Naive thymus-derived CD4-positive, alpha-beta T cell (primary cell): ENCODE measurements at regions of chr22 and their contacts with region 1.

Region 1: GRCh38 chr22:40024201-40025061 is 29.7 kb downstream of the FAM83F start:
- DNase-seq: peak; percentile 26 to 59 (median 44)
- ATAC-seq: peak; percentile 79
- H3K4me3 ChIP-seq: no peak overlapping the region
- H3K4me3 Mint-ChIP-seq: no peak overlapping the region
- H3K27ac ChIP-seq: no peak overlapping the region
- H3K27ac Mint-ChIP-seq: no peak overlapping the region
- H3K4me1 ChIP-seq: peaks cover 0 to 4% of the 10 kb centered on the region in 2 donors
- H3K4me1 Mint-ChIP-seq: peaks cover 0 to 6% (median 4%) of the 10 kb centered on the region in 7 donors
- H3K27me3 ChIP-seq: no peaks in the 10 kb centered on the region
- H3K27me3 Mint-ChIP-seq: no peaks in the 10 kb centered on the region

Region 2: DNA sequence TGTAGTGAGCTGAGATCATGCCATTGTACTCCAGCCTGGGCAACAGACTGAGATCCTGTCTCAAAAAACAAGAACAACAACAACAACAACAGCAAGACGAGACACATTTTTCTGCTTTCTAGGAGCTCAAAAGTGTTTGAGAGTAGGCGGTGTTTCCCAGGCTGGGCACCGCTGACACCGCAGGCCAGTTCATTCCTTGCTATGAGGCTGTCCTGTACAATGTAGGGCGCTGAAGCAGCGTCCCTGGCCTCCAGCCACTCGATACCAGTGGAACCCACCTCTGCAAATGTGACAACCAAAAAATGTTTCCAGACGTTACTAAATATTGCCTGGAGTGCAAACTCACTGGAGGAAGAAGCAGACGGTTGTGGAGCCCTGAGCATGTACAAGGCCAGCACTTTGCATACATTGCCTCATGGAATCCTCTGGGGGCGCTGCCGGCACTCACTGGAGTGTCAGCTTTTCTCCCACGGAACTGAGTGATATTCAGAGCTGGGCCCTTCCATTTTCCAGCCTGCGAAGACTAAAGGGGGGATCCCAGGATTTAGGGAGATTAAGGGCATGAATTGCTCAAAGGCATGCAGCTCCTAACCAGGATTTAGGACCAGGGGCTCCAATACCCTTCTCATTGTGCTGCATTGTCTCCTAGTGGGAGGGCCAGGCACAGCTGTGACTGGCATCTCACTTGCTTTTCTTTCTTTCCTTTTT is 528.1 kb before region 1 on chr22:
- CTCF ChIA-PET with region 1: interaction called, 14 read pairs
- POLR2A ChIA-PET with region 1: no interaction called
- intact Hi-C with region 1: loop called (anchors 1 to 5 kb)
- DNase-seq: peak in 8 of 9 donors; percentile 31 to 62 (median 51)
- ATAC-seq: peak; percentile 79
- H3K4me3 ChIP-seq: no peak overlapping the region
- H3K4me3 Mint-ChIP-seq: no peak overlapping the region
- H3K27ac ChIP-seq: no peak overlapping the region
- H3K27ac Mint-ChIP-seq: peak overlapping the region in 4 of 9 donors; percentile 17 to 91 (median 28)
- H3K4me1 ChIP-seq: no peaks in the 10 kb centered on the region
- H3K4me1 Mint-ChIP-seq: peaks cover 9 to 22% (median 15%) of the 10 kb centered on the region in 7 donors
- H3K27me3 ChIP-seq: no peaks in the 10 kb centered on the region
- H3K27me3 Mint-ChIP-seq: peaks cover 0 to 7% (median 0%) of the 10 kb centered on the region in 5 donors

Region 3: GRCh38 chr22:39612811-39613548 is 411.5 kb before region 1 on chr22:
- CTCF ChIA-PET with region 1: no interaction called
- POLR2A ChIA-PET with region 1: no interaction called
- intact Hi-C with region 1: loop called in 1 of 2 experiments (anchors 5 kb)
- DNase-seq: peak in 7 of 9 donors; percentile 24 to 74 (median 39)
- ATAC-seq: peak; percentile 71
- H3K4me3 ChIP-seq: no peak overlapping the region
- H3K4me3 Mint-ChIP-seq: peak overlapping the region; percentile 42 to 88 (median 73)
- H3K27ac ChIP-seq: peak overlapping the region; percentile 41
- H3K27ac Mint-ChIP-seq: peak overlapping the region; percentile 64 to 95 (median 78)
- H3K4me1 ChIP-seq: peaks cover 0 to 32% of the 10 kb centered on the region in 2 donors
- H3K4me1 Mint-ChIP-seq: peaks cover 16 to 69% (median 48%) of the 10 kb centered on the region in 7 donors
- H3K27me3 ChIP-seq: no peaks in the 10 kb centered on the region
- H3K27me3 Mint-ChIP-seq: peaks cover 0 to 38% (median under 1%) of the 10 kb centered on the region in 5 donors

Region 4: DNA sequence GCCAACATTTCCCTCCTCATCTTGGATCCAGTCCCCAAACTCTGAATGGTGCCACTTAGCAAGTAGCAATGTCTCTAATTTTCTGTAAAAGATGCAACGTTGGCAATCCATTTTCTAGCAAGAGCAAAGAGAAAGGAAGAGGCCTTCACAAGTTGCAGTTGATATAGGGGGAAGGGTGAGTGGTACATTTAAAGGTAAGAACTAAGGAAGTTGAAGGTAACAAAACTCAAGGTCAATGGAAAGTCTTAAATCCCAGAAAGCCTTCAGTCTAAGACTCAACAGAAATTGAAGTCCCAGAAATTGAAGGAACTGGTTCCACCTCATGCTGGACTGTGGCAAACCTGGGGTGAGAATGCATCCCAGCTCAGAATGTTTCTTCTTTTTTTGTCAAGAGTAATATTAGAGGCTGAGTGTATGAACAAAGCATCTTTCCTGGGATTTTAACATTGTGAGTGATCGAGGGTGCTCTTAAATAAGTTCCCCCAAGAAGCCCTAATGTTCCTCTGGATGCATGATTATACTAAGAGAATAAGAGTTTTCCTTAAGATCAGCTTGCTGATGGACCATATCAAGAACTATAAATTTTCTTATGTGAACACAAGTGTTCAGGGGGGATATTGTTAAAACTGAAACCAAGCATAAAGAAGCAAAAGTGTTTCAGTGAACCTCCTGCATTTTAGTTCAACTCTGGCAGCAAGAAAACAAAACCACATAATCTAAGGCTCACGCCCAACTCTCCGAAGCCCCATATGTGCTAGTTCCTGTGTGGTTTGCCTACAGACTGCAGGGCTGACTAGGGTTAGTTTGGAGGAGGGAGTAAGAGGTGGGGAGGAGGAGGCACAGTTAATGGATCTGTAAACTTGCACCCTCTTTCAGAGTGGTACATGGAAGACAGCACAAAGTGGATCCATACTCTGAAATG is 123.9 kb before region 1 on chr22 and contains the start of gene GRAP2:
- CTCF ChIA-PET with region 1: interaction called, 26 read pairs
- POLR2A ChIA-PET with region 1: no interaction called
- intact Hi-C with region 1: loop called in 1 of 2 experiments (anchors 1 kb)
- DNase-seq: peak in 8 of 9 donors; percentile 52 to 90 (median 86)
- ATAC-seq: peak; percentile 98
- H3K4me3 ChIP-seq: peak within 1 kb of the TSS; percentile 71
- H3K4me3 Mint-ChIP-seq: peak within 1 kb of the TSS in 9 of 10 donors; percentile 95 to 99 (median 97)
- H3K27ac ChIP-seq: peak within 1 kb of the TSS; percentile 83
- H3K27ac Mint-ChIP-seq: peak within 1 kb of the TSS in 6 of 9 donors; percentile 86 to 99 (median 96)
- H3K4me1 ChIP-seq: peaks cover 23 to 27% of the 10 kb centered on the region in 2 donors
- H3K4me1 Mint-ChIP-seq: peaks cover 13 to 31% (median 22%) of the 10 kb centered on the region in 7 donors
- H3K27me3 ChIP-seq: no peaks in the 10 kb centered on the region
- H3K27me3 Mint-ChIP-seq: no peaks in the 10 kb centered on the region
- total RNA-seq, gene GRAP2: 108 to 156 (median 145) TPM

Region 5: GRCh38 chr22:39946503-39947219 is 77.8 kb before region 1 on chr22:
- CTCF ChIA-PET with region 1: interaction called, 23 read pairs
- POLR2A ChIA-PET with region 1: no interaction called
- intact Hi-C with region 1: loop called in 1 of 2 experiments (anchors 2 kb)
- DNase-seq: no peak
- ATAC-seq: peak; percentile 49
- H3K4me3 ChIP-seq: peak overlapping the region; percentile 26
- H3K4me3 Mint-ChIP-seq: peak overlapping the region in 9 of 10 donors; percentile 65 to 82 (median 78)
- H3K27ac ChIP-seq: peak overlapping the region; percentile 79
- H3K27ac Mint-ChIP-seq: peak overlapping the region in 5 of 9 donors; percentile 77 to 98 (median 98)
- H3K4me1 ChIP-seq: peaks cover 81 to 99% of the 10 kb centered on the region in 2 donors
- H3K4me1 Mint-ChIP-seq: peaks cover 78 to 100% (median 96%) of the 10 kb centered on the region in 7 donors
- H3K27me3 ChIP-seq: no peaks in the 10 kb centered on the region
- H3K27me3 Mint-ChIP-seq: no peaks in the 10 kb centered on the region

Region 6: GRCh38 chr22:39960791-39961746 is 63.4 kb before region 1 on chr22:
- CTCF ChIA-PET with region 1: interaction called, 8 read pairs
- POLR2A ChIA-PET with region 1: interaction called, 3 read pairs
- intact Hi-C with region 1: loop called in 1 of 2 experiments (anchors 1 kb)
- DNase-seq: peak in 3 of 9 donors; percentile 18 to 63 (median 41)
- ATAC-seq: peak; percentile 95
- H3K4me3 ChIP-seq: no peak overlapping the region
- H3K4me3 Mint-ChIP-seq: peak overlapping the region; percentile 21 to 78 (median 52)
- H3K27ac ChIP-seq: peak overlapping the region; percentile 44
- H3K27ac Mint-ChIP-seq: peak overlapping the region in 7 of 9 donors; percentile 81 to 93 (median 85)
- H3K4me1 ChIP-seq: peaks cover 42 to 48% of the 10 kb centered on the region in 2 donors
- H3K4me1 Mint-ChIP-seq: peaks cover 43 to 68% (median 61%) of the 10 kb centered on the region in 7 donors
- H3K27me3 ChIP-seq: no peaks in the 10 kb centered on the region
- H3K27me3 Mint-ChIP-seq: no peaks in the 10 kb centered on the region

Region 7: GRCh38 chr22:40036591-40037225 is 12.3 kb after region 1 on chr22:
- CTCF ChIA-PET with region 1: interaction called, 14 read pairs
- POLR2A ChIA-PET with region 1: no interaction called
- intact Hi-C with region 1: no loop called
- DNase-seq: peak in 7 of 9 donors; percentile 26 to 56 (median 48)
- ATAC-seq: peak; percentile 81
- H3K4me3 ChIP-seq: no peak overlapping the region
- H3K4me3 Mint-ChIP-seq: no peak overlapping the region
- H3K27ac ChIP-seq: no peak overlapping the region
- H3K27ac Mint-ChIP-seq: no peak overlapping the region
- H3K4me1 ChIP-seq: no peaks in the 10 kb centered on the region
- H3K4me1 Mint-ChIP-seq: peaks cover 0 to 7% (median 6%) of the 10 kb centered on the region in 7 donors
- H3K27me3 ChIP-seq: peaks cover 0 to 3% of the 10 kb centered on the region in 2 donors
- H3K27me3 Mint-ChIP-seq: peaks cover 3 to 25% (median 15%) of the 10 kb centered on the region in 5 donors

Region 8: DNA sequence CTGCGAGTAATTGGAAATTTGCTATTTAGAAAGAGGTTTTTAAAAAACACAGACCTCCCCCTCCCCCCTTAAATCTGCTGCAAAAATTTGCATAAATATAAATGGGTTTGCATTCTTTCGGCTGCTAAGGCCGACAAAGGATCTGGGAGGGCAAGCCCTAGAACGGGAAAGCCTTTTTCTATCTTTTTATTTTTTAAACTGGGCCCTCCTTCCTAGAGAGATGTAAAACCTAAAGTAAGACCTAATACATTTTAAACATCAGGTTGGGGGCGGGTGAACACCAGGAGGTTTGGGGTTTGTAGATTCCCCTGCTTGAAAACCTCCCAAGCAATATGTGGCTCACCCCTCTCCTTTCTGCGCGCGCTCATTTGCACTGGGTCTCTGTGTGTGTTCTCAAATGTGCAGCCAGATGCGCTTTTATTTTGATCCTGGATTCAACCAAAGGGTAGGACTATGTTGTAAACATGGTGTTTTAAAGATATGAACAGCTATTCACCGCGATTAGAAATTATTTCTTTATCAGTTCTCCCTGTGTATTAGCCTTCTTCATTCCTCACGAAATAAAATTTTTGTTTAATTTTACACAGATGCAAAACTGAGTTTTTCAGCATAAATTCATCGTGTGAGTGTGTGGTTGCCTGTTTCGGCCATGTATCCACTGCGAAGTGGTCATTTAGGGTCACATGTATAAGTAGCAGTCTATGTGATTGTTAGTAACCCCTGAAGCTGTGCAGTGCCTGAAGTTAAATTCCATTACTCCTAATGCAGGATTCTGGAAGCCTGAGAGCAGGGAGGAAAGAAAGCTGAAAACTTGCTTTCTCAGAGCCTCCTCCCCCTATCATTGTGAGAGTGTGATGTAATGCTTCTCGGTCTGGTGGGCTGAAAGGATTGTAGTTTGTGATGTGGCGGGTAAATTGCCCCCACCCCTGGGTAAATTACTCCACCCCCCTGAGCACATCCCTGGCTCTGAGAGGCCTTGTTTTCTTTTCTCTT is 154.3 kb after region 1 on chr22:
- CTCF ChIA-PET with region 1: no interaction called
- POLR2A ChIA-PET with region 1: no interaction called
- intact Hi-C with region 1: no loop called
- DNase-seq: peak in 7 of 9 donors; percentile 15 to 51 (median 34)
- ATAC-seq: no peak
- H3K4me3 ChIP-seq: peak overlapping the region; percentile 72
- H3K4me3 Mint-ChIP-seq: peak overlapping the region; percentile 80 to 97 (median 90)
- H3K27ac ChIP-seq: peak overlapping the region; percentile 71
- H3K27ac Mint-ChIP-seq: peak overlapping the region; percentile 85 to 94 (median 91)
- H3K4me1 ChIP-seq: peaks cover 35 to 52% of the 10 kb centered on the region in 2 donors
- H3K4me1 Mint-ChIP-seq: peaks cover 44 to 84% (median 68%) of the 10 kb centered on the region in 7 donors
- H3K27me3 ChIP-seq: no peaks in the 10 kb centered on the region
- H3K27me3 Mint-ChIP-seq: no peaks in the 10 kb centered on the region